Vagina (tissue), 2 donors: ENCODE measurements at regions of chr14 and their contacts with region 1.

Region 1: DNA sequence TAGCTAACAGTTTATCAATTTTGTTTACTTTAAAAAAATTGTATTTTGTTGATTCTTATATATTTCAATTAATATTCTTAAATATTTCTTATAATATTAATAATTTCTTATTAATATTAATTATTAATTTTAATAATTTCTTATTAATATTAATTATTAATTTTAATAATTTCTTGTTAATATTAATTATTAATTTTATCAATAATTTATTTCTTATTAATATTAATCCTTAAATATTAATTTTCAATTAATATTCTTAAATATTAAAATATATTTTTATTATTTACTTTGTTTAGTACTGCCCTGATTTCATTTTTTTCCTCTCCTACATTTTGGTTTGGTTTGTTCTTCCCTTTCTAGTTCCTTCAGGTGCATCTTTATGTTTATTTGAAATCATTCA is 1208.1 kb downstream of the LRFN5 start:
- DNase-seq: no peak
- H3K4me3 ChIP-seq: no peak overlapping the region
- H3K27ac ChIP-seq: no peak overlapping the region
- H3K4me1 ChIP-seq: no peaks in the 10 kb centered on the region
- H3K27me3 ChIP-seq: no peaks in the 10 kb centered on the region
- CTCF ChIP-seq: no peak
- POLR2A ChIP-seq: no peak

Region 2: GRCh38 chr14:41313196-41313595 is 1501.6 kb before region 1 on chr14:
- intact Hi-C with region 1: loop called (anchors 10 kb)
- DNase-seq: no peak
- H3K4me3 ChIP-seq: no peak overlapping the region
- H3K27ac ChIP-seq: no peak overlapping the region
- H3K4me1 ChIP-seq: no peaks in the 10 kb centered on the region
- H3K27me3 ChIP-seq: no peaks in the 10 kb centered on the region
- CTCF ChIP-seq: no peak
- POLR2A ChIP-seq: no peak